Endothelial cell of umbilical vein (primary cell): ENCODE measurements at regions of chr3 and their contacts with region 1.

Region 1: GRCh38 chr3:46496741-46497554 is 828 bp upstream of the RTP3 start:
- DNase-seq: peak; percentile 36
- H3K4me3 ChIP-seq: no peak overlapping the region
- H3K27ac ChIP-seq: no peak overlapping the region
- H3K4me1 ChIP-seq: peaks cover 12% of the 10 kb centered on the region
- H3K27me3 ChIP-seq: no peaks in the 10 kb centered on the region
- CTCF ChIP-seq: peak; percentile 25 to 28
- POLR2A ChIP-seq: no peak

Region 2: DNA sequence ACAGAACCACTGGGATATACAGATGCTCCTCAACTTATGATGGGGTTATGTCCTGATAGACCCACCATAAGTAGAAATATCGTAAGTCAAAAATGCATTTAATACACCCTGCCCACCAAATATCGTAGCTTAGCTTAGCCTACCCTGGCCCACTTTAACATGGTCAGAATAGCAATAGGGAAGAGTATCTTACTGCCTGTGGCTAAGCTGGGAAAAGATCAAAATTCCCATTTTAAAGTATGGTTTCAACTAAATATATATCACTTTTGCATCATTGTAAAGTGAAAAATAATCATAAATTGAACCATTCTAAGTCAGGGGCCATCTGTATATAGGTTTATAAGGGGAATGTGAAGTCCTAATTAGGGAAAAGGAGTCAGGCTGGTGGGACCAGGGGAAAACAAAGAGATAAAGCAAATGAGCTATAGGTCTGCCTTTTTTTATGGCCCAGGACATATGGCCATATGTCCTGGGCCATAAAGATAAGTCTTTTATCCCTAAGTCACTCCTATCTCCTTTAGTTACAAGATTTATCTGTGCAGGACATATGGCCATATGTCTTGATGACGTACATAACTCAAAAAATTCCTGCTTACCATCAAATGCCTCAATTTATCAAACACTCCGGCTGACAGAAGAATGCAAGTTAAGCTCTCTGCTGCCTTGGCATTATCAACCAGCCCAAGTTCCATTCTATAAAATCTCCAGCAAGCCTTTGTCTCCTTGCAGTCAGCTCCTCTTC is 12.1 kb after region 1 on chr3:
- CTCF ChIA-PET with region 1: interaction called, 21 read pairs
- POLR2A ChIA-PET with region 1: no interaction called
- dilution Hi-C with region 1: no loop called
- intact Hi-C with region 1: no loop called
- DNase-seq: no peak
- H3K4me3 ChIP-seq: no peak overlapping the region
- H3K27ac ChIP-seq: no peak overlapping the region
- H3K4me1 ChIP-seq: no peaks in the 10 kb centered on the region
- H3K27me3 ChIP-seq: peaks cover 0 to 2% of the 10 kb centered on the region in 2 experiments
- CTCF ChIP-seq: no peak
- POLR2A ChIP-seq: no peak

Region 3: DNA sequence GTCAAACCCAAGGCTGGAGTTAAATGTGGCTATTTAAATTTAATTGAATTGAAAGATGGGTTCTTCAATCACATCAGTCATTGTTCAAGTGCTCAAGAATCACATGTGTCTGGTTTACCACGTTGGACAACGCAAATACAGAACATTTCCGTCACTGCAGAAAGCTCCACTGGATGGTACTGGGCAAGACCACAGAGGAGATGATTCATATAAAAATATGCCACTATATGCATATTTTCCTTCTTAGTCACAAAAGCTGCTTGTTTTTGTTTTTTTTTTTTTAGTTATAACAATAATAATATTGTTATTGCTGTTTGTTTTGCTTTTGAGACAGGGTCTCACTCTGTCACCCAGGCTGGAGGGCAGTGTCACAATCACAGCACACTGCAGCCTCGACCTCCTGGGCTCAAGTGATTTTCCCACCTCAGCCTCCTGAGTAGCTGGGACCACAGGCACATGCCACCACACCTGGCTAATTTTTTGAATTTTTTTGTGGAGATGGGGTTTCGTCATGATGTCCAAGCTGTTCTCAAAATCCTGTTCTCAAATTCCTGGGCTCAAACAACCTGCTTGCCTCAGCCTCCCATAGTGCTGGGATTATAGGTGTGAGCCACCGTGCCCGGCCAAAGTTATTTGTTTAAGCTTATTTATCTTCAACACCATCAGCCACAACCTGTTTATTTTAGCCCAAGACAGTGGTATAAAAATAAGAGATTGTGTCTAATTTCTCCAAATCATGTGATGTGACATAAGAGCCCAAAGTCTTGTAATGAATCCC is 20.3 kb after region 1 on chr3:
- CTCF ChIA-PET with region 1: interaction called, 11 read pairs
- POLR2A ChIA-PET with region 1: no interaction called
- dilution Hi-C with region 1: no loop called
- intact Hi-C with region 1: no loop called
- DNase-seq: peak; percentile 61
- H3K4me3 ChIP-seq: no peak overlapping the region
- H3K27ac ChIP-seq: peak overlapping the region; percentile 84
- H3K4me1 ChIP-seq: peaks cover 37% of the 10 kb centered on the region
- H3K27me3 ChIP-seq: no peaks in the 10 kb centered on the region
- CTCF ChIP-seq: no peak
- POLR2A ChIP-seq: no peak